Colonic mucosa (tissue), 4 donors: ENCODE measurements at regions of chr10 and their contacts with region 1.

Region 1: GRCh38 chr10:102225646-102226541 is at the start of gene ELOVL3:
- DNase-seq: peak; percentile 95
- H3K4me3 ChIP-seq: peak within 1 kb of the TSS; percentile 27
- H3K27ac ChIP-seq: peak within 1 kb of the TSS; percentile 36
- H3K4me1 ChIP-seq: peaks cover 5% of the 10 kb centered on the region
- H3K27me3 ChIP-seq: peaks cover 9% of the 10 kb centered on the region
- CTCF ChIP-seq: no peak
- total RNA-seq, gene ELOVL3: 0.24 TPM in 1 of 2 donors, not detected in the other

Region 2: DNA sequence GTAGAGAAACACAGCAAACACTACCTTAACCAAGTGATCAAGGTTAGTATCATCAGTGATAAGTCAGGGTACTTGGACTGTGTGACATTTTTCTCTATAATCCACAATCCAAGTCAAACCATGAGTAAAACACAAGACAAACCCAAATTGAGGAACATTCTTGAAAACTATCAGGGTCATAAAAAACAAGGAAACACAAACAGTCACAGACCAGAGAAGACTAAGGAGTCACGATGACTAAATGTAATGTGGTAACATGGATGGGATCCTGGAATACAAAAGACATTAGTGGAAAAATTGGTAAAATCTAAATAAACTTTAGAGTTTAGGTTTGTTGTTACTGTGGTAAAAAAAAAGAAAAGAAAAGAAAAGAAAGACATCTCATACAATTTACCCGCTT is 273.7 kb before region 1 on chr10:
- intact Hi-C with region 1: no loop called
- DNase-seq: no peak
- H3K4me3 ChIP-seq: no peak overlapping the region
- H3K27ac ChIP-seq: no peak overlapping the region
- H3K4me1 ChIP-seq: no peaks in the 10 kb centered on the region
- H3K27me3 ChIP-seq: no peaks in the 10 kb centered on the region
- CTCF ChIP-seq: no peak

Region 3: DNA sequence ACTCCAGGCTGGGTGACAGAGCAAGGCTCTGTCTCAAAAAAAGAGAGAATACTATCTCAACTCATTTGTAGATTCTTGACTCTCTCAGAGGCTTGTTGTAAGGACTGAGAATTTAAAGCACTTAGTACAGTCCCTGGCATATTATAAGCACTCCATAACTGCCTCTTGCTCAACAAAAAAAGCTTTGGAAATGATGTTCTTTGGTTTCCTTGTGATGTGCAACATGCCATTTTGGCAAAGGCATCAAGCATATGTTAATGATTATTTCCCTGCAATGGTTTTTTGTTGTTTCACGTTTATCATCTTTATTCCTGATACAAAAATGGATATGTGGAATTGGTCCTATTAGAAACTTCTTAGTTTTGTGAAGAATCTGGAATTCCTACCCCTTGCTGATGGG is 58.0 kb before region 1 on chr10:
- intact Hi-C with region 1: loop called (anchors 2 kb)
- DNase-seq: no peak
- H3K4me3 ChIP-seq: no peak overlapping the region
- H3K27ac ChIP-seq: no peak overlapping the region
- H3K4me1 ChIP-seq: no peaks in the 10 kb centered on the region
- H3K27me3 ChIP-seq: no peaks in the 10 kb centered on the region
- CTCF ChIP-seq: no peak

Region 4: GRCh38 chr10:102352066-102352715 is 126.3 kb after region 1 on chr10:
- intact Hi-C with region 1: loop called (anchors 2 kb)
- DNase-seq: peak; percentile 69
- H3K4me3 ChIP-seq: no peak overlapping the region
- H3K27ac ChIP-seq: no peak overlapping the region
- H3K4me1 ChIP-seq: no peaks in the 10 kb centered on the region
- H3K27me3 ChIP-seq: no peaks in the 10 kb centered on the region
- CTCF ChIP-seq: peak; percentile 92

Region 5: GRCh38 chr10:102399217-102400089 is 173.6 kb after region 1 on chr10:
- intact Hi-C with region 1: loop called (anchors 5 kb)
- DNase-seq: peak; percentile 91
- H3K4me3 ChIP-seq: peak overlapping the region; percentile 56
- H3K27ac ChIP-seq: peak overlapping the region; percentile 82
- H3K4me1 ChIP-seq: peaks cover 11% of the 10 kb centered on the region
- H3K27me3 ChIP-seq: no peaks in the 10 kb centered on the region
- CTCF ChIP-seq: peak; percentile 90

Region 6: DNA sequence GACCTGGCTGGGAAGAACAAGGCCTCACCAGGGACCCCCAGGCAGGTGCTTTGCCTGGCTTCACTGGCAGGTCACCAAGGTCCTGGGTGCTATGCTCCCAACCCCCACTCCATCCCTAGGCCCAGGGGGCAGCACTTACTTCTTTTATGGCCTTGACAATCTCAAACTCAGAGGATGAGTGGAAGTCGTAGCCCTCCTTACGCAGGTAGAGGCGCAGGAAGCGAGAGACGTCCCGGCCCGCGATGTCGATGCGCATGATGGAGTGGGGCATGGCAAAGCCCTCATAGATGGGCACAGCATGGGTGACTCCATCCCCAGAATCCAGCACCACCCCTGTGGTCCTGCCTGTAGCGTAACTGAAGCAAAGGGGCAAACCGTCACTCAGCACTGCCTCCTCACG is 258.1 kb after region 1 on chr10:
- intact Hi-C with region 1: loop called (anchors 2 kb)
- DNase-seq: no peak
- H3K4me3 ChIP-seq: no peak overlapping the region
- H3K27ac ChIP-seq: no peak overlapping the region
- H3K4me1 ChIP-seq: no peaks in the 10 kb centered on the region
- H3K27me3 ChIP-seq: no peaks in the 10 kb centered on the region
- CTCF ChIP-seq: no peak